ENCODE measurements at regions of chr11 and their contacts with region 1.

Region 1: DNA sequence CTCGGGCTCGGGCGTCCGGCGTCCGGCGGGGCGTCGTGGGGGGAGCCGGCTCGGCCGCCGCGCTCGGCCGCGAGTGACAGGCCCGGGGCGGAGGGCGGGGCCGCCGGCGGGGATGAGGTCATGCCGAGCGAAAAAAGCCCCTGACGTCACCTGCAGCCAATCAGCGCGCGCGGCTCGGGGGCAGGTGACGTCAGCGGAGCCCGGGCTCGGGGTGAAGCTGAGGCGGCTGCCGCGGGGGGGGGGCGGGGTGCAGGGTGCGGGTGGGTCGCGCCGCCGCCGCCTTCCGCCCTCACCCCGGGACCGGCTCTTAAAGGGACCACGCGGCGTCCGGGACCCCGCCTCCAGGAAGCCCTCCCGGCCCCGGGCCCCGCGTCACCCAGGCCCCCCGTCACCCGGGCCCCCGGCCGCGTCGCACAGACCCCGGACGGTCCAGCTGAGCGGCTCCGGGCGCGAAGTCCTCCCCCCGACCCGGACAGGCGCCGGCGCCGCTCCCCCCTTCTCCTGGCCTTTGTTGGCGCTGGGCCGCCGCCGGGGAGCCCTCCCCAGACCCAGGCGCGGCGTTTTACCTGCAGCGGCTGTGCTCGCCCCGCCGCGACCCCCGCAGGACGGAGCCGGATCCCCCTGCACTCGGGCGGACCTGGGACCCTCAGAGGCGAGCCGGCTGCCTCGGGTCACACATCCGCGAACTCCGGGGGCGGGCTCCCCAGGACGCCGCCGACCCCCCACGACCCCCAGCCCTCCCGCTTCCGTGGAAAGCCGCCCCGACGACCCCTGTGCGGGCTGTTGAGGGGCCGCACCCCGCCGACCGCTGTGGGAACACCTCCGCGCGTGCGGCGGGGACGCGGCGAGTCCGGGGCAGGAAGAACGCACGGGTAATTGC is at the start of gene DUSP8:
- DNase-seq: peak; percentile 92
- H3K4me3 Mint-ChIP-seq: peak within 1 kb of the TSS; percentile 64
- H3K27ac Mint-ChIP-seq: no peak within 1 kb of the TSS
- H3K4me1 Mint-ChIP-seq: peaks cover 19% of the 10 kb centered on the region
- H3K27me3 Mint-ChIP-seq: peaks cover 15% of the 10 kb centered on the region
- total RNA-seq, gene DUSP8: 2.9 to 3.0 TPM

Region 2: DNA sequence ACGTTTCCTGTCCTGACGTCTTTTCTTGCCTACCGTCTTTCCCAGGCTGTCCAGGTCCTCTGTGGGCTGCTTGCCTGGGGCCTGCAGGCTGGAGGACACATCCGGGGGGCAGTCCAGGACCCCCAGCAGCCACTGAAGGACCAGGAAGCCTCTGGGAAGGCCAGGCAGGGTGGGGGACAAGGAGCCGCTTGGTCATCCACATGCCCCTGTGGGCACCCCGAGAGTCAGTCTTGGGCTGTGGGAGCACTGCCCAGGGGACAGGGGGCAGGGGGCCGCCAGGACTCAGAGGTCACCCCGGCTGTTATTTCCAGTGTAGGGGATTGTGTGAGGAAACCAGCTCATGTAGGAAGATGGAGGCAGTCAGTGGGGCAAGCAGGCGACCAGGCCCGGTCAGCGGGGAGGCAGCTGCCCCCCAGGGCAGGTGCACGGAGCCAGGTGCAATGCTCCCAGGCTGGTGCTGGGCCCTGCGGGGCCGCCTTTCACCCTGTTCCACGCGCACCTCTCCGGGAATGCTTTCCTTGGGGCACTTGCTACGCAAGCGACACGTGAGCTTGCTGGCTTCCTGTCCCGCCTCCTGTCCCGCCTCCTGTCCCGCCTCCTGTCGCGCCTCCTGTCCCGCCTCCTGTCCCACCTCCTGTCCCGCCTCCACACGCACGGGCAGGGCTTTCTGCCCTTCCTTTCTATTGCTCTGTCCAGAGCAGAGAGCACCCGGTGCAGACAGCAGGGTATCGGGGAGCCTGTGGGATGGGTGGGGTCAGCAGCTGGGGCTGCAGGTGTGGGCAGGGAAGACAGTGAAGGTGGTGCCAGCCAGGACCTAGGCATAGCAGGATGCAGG is 310.0 kb before region 1 on chr11:
- CTCF ChIA-PET with region 1: interaction called, 7 read pairs
- intact Hi-C with region 1: loop called (anchors 2 kb)
- DNase-seq: peak; percentile 94
- H3K4me3 Mint-ChIP-seq: peak overlapping the region; percentile 85
- H3K27ac Mint-ChIP-seq: peak overlapping the region; percentile 87
- H3K4me1 Mint-ChIP-seq: peaks cover 16% of the 10 kb centered on the region
- H3K27me3 Mint-ChIP-seq: no peaks in the 10 kb centered on the region

Region 3: GRCh38 chr11:1501421-1502167 is 70.8 kb before region 1 on chr11:
- CTCF ChIA-PET with region 1: no interaction called
- intact Hi-C with region 1: no loop called
- DNase-seq: no peak
- H3K4me3 Mint-ChIP-seq: no peak overlapping the region
- H3K27ac Mint-ChIP-seq: no peak overlapping the region
- H3K4me1 Mint-ChIP-seq: peaks cover 27% of the 10 kb centered on the region
- H3K27me3 Mint-ChIP-seq: no peaks in the 10 kb centered on the region

Region 4: DNA sequence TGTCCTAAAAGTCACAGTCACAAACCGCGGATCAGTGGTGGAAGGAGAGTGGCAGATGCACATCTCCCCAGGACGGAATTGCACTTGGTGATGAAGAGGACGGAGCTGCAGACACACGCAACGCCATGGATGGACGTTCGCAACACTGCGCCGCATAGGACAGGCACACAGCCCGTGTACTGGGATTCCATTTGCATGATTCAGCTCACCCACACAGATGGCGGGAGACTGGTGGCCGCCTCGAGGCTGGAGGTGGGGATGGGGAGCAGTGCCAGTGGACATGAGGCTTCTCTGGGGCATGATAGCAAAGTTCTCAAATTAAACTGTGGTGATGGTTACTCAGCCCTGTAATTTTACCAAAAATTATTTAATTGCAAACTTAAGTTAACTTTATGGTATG is 37.8 kb before region 1 on chr11:
- CTCF ChIA-PET with region 1: interaction called, 7 read pairs
- intact Hi-C with region 1: loop called (anchors 5 kb)
- DNase-seq: no peak
- H3K4me3 Mint-ChIP-seq: no peak overlapping the region
- H3K27ac Mint-ChIP-seq: no peak overlapping the region
- H3K4me1 Mint-ChIP-seq: peaks cover 40% of the 10 kb centered on the region
- H3K27me3 Mint-ChIP-seq: no peaks in the 10 kb centered on the region

Region 5: DNA sequence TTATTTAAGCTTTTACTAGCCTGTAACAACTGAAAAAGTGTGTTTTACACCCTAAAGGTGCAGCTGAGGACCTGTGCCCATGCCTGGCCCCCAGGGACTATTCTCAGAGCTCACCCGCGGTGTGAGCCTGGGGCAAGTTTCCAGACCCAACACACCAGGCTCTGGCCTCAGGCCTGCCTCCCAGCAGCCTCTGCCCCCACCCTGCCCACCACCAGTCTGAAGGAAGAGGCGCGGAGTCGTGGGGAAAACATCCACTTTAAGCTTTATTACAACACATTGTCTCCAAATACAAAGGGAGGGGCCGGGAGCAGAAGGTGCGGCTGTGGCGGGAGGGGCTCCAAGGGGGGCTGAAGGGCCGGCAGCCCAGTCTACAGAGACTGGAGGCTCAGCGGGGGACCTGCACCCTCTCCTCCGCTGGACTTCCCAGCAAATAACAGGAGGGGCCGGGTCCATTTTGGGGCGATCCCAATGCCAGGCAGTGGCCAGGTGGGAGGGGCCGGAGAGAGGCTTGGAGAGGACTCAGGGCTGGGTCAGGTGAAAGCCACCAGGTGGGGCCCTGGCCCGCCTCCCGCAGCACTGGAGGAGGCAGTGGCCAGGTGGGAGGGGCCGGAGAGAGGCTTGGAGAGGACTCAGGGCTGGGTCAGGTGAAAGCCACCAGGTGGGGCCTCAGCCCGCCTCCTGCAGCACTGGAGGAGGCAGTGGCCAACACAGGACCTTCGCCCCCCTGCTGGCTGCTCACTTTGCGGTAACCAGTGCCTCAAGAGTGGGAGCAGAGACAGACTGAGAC is 18.4 kb before region 1 on chr11:
- CTCF ChIA-PET with region 1: interaction called, 56 read pairs
- intact Hi-C with region 1: no loop called
- DNase-seq: no peak
- H3K4me3 Mint-ChIP-seq: no peak overlapping the region
- H3K27ac Mint-ChIP-seq: no peak overlapping the region
- H3K4me1 Mint-ChIP-seq: no peaks in the 10 kb centered on the region
- H3K27me3 Mint-ChIP-seq: peaks cover 4% of the 10 kb centered on the region

Region 6: DNA sequence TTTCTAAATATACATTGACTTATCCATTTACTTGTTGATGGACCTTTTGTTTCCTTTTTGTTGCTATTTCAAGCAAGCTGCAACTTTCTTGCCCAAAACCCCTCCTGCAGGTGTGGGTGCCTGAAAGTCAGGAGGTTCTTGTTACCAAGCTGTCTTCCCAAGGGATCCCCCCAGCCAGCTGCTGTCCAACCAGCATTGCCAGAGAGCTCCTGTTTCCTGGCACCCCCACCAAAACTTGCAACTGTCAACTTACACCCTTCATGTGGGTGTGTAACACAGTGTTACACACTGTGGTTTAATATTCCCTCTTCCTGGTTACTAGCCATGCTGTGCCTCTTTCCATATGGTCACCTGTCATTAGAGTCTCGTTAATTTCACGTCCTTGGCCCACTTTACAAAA is 14.3 kb after region 1 on chr11:
- CTCF ChIA-PET with region 1: interaction called, 12 read pairs
- intact Hi-C with region 1: no loop called
- DNase-seq: no peak
- H3K4me3 Mint-ChIP-seq: no peak overlapping the region
- H3K27ac Mint-ChIP-seq: no peak overlapping the region
- H3K4me1 Mint-ChIP-seq: peaks cover 19% of the 10 kb centered on the region
- H3K27me3 Mint-ChIP-seq: peaks cover 11% of the 10 kb centered on the region

Measured in activated naive CD4-positive, alpha-beta T cell treated with anti-CD3 and anti-CD28 coated beads for 36 hours (primary cell).